Endothelial cell of umbilical vein (primary cell): ENCODE measurements at regions of chr7 and their contacts with region 1.

Region 1: GRCh38 chr7:136956232-136956631 is 87.8 kb downstream of the CHRM2 start:
- DNase-seq: no peak
- H3K4me3 ChIP-seq: peak overlapping the region in 1 of 3 experiments; percentile 35
- H3K27ac ChIP-seq: peak overlapping the region; percentile 93
- H3K4me1 ChIP-seq: peaks cover 46% of the 10 kb centered on the region
- H3K27me3 ChIP-seq: no peaks in the 10 kb centered on the region
- CTCF ChIP-seq: no peak
- POLR2A ChIP-seq: no peak

Region 2: GRCh38 chr7:136857573-136857972 is 98.7 kb before region 1 on chr7:
- CTCF ChIA-PET with region 1: no interaction called
- POLR2A ChIA-PET with region 1: interaction called, 3 read pairs
- dilution Hi-C with region 1: no loop called
- intact Hi-C with region 1: loop called (anchors 1 kb)
- DNase-seq: peak; percentile 51
- H3K4me3 ChIP-seq: no peak overlapping the region
- H3K27ac ChIP-seq: no peak overlapping the region
- H3K4me1 ChIP-seq: peaks cover 14% of the 10 kb centered on the region
- H3K27me3 ChIP-seq: no peaks in the 10 kb centered on the region
- CTCF ChIP-seq: no peak
- POLR2A ChIP-seq: no peak

Region 3: GRCh38 chr7:136874238-136875032 is 81.8 kb before region 1 on chr7:
- CTCF ChIA-PET with region 1: interaction called, 6 read pairs
- POLR2A ChIA-PET with region 1: no interaction called
- dilution Hi-C with region 1: no loop called
- intact Hi-C with region 1: loop called (anchors 5 kb)
- DNase-seq: peak; percentile 28
- H3K4me3 ChIP-seq: no peak overlapping the region
- H3K27ac ChIP-seq: no peak overlapping the region
- H3K4me1 ChIP-seq: peaks cover 6% of the 10 kb centered on the region
- H3K27me3 ChIP-seq: peaks cover 39 to 56% of the 10 kb centered on the region in 2 experiments
- CTCF ChIP-seq: peak; percentile 28 to 53
- POLR2A ChIP-seq: no peak

Region 4: DNA sequence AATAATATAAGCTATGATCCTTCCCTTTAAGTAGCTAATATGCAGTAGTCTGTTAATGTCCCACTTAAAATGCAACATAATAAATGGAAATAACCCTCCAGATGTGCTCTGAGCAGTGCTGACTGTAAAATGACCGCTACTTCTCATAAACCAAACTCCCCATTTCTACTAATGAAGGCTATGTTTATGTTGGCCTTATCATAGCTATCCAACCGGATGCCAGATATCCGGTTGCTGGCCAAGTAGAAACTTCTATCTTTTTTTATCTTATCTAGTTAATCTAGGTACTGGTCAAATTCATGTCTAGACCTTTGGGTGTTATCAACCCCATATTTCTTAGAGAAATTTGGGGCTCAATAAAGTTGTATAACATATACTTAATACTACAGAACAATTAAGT is 31.2 kb before region 1 on chr7:
- CTCF ChIA-PET with region 1: interaction called, 10 read pairs
- POLR2A ChIA-PET with region 1: interaction called, 4 read pairs
- dilution Hi-C with region 1: no loop called
- intact Hi-C with region 1: loop called (anchors 1 kb)
- DNase-seq: peak; percentile 93
- H3K4me3 ChIP-seq: peak overlapping the region in 1 of 3 experiments; percentile 43
- H3K27ac ChIP-seq: peak overlapping the region; percentile 70
- H3K4me1 ChIP-seq: peaks cover 30% of the 10 kb centered on the region
- H3K27me3 ChIP-seq: no peaks in the 10 kb centered on the region
- CTCF ChIP-seq: no peak
- POLR2A ChIP-seq: peak; percentile 60

Region 5: DNA sequence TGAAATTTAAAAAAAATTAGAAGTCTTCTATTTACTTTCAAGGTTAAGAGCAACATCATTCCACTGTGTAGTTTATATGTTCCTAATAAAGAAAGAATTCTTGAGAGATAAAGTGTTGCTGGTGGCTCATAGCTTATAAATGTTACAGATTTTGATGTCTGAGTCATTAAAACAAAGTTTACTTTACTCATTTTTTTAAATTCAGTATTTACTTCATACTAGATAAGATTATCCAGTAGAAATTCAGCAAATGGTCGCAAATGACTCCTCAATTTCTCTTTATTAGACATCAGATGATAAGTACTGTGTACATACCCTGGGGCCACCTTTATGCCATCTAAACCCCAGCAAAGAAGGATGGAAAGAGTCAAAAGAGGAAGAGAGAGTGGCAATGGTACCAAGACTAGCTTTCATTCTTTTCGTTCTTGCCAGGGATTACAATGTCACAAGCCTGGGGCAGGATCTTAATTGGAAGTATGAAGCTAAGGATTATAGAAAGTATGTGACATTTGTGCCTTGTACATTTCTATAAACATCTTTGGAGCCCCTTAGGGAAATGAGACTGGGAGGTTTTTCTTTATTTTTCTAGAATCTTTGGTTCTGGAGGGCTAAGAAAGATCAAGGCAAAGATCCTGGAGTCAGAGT is 118.3 kb after region 1 on chr7:
- CTCF ChIA-PET with region 1: no interaction called
- POLR2A ChIA-PET with region 1: no interaction called
- dilution Hi-C with region 1: no loop called
- intact Hi-C with region 1: loop called (anchors 5 kb)
- DNase-seq: no peak
- H3K4me3 ChIP-seq: no peak overlapping the region
- H3K27ac ChIP-seq: no peak overlapping the region
- H3K4me1 ChIP-seq: peaks cover 7% of the 10 kb centered on the region
- H3K27me3 ChIP-seq: no peaks in the 10 kb centered on the region
- CTCF ChIP-seq: no peak
- POLR2A ChIP-seq: no peak

Region 6: GRCh38 chr7:137110091-137110509 is 153.9 kb after region 1 on chr7:
- CTCF ChIA-PET with region 1: no interaction called
- POLR2A ChIA-PET with region 1: no interaction called
- dilution Hi-C with region 1: no loop called
- intact Hi-C with region 1: no loop called
- DNase-seq: no peak
- H3K4me3 ChIP-seq: no peak overlapping the region
- H3K27ac ChIP-seq: no peak overlapping the region
- H3K4me1 ChIP-seq: no peaks in the 10 kb centered on the region
- H3K27me3 ChIP-seq: no peaks in the 10 kb centered on the region
- CTCF ChIP-seq: no peak
- POLR2A ChIP-seq: no peak

Region 7: DNA sequence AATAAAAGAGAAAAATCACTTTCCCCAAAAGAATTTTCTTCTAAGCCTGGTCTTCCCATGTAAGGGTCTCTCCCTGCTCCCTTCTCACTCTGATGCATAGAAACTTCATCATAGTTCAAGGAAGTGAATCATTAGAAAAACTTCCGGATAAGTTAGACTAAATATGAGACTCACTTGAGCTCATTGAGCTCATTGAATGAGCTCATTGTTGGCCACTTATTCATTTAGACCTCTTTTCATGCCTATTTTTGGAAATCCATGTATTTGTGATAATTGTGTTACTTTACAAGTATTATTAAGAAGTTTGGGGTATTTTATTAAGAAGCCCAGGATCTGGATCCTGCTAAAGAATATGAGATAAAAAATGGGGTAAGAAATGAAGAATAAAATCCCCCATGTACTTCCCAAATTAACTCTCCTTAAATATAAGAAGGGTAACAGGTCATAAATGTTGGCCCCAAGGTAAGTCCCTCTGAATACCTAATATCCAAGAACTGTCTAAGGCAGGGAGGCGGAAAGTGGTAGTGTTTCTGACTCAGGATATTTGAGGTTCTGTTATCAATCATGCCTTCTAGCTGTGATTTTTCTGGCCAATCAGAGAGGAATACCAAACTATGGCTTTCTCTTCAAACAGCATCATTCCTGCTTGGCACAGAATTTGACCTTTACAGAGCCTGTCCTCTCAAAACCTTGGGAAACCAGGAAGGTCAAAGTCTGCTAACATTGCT is 623.8 kb after region 1 on chr7:
- CTCF ChIA-PET with region 1: interaction called, 4 read pairs
- POLR2A ChIA-PET with region 1: no interaction called
- dilution Hi-C with region 1: no loop called
- intact Hi-C with region 1: loop called (anchors 1 kb)
- DNase-seq: peak; percentile 90
- H3K4me3 ChIP-seq: peak overlapping the region in 1 of 3 experiments; percentile 25
- H3K27ac ChIP-seq: peak overlapping the region; percentile 92
- H3K4me1 ChIP-seq: peaks cover 23% of the 10 kb centered on the region
- H3K27me3 ChIP-seq: no peaks in the 10 kb centered on the region
- CTCF ChIP-seq: no peak
- POLR2A ChIP-seq: no peak